Lower lobe of right lung (tissue), 2 donors: ENCODE measurements at regions of chr16 and their contacts with region 1.

Region 1: DNA sequence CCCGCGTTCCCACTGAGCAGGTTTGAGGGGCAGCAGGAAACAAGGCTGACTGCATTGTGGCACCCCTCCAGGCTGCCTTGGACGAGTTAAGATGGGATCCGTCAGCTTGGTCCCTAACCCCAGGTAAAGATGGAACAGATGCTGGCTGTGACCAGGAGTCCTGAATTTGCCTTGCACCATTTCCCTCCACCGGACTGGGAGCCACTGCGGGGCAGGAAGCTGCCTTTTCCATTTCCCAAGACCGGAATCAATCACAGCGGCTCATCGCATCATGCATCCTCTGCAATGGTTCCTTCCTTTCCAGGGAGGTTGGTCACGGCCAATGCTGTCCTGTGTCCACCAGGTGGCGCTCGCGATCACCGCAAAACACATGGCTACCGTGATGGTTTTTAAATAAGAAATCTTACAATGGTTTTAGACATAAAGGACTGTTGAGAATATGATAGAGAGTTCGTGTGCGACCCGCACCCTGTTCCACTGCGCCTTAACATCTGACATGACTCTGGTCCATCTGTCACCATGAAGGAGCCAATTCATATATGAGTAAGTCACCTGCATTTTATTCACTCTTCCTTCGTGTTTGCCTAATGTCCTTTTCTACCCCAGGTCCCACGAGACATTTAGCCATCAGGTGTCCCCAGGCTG is 6.8 kb upstream of the MEAK7 start:
- DNase-seq: peak; percentile 87
- ATAC-seq: peak; percentile 80 to 81
- H3K4me3 ChIP-seq: no peak overlapping the region
- H3K27ac ChIP-seq: no peak overlapping the region
- H3K4me1 ChIP-seq: peaks cover 8% of the 10 kb centered on the region
- H3K27me3 ChIP-seq: no peaks in the 10 kb centered on the region
- CTCF ChIP-seq: peak; percentile 96

Region 2: DNA sequence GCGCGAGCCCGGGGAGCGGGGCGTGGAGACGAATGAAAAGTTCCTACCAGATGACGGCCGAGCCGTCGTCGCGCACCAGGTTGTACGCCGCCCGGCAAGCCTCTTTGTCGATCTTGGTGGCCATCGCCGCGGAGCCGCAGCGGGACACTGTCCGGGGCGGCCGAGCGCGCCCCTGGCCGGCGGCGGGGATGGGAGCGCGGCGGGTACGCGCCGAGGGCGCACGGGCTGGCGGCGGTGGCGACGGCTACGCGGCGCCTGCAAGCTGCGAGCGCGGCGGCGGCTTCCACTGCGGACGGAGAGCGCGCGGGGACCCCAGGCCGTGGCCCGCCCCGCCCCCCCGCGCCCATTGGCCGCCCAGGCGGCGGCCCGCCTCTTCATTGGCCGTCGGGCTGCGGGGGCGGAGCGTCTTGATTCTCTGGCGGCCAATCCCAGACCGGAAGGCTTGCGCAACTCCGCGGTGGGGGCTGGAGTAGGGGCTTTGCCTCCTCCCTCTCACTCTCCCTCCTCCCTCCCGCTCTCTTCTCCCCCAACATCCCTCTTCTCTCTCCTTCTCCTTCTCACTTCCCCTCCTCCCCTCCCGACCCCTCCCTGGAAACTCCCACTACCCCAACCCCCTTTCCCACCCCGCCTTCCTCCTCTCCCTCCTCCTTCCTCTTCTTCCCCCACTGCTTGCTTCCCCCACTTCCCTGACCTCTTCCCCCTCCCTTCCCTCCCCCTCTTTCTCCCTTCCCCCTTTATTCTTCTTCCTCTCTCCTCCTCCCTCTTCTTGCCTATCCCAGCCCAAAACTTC is 106.7 kb after region 1 on chr16 and contains the start of gene COTL1:
- intact Hi-C with region 1: loop called (anchors 5 kb)
- DNase-seq: peak; percentile 98
- ATAC-seq: peak; percentile 90 to 94
- H3K4me3 ChIP-seq: peak within 1 kb of the TSS; percentile 92
- H3K27ac ChIP-seq: peak within 1 kb of the TSS; percentile 81
- H3K4me1 ChIP-seq: peaks cover 42% of the 10 kb centered on the region
- H3K27me3 ChIP-seq: no peaks in the 10 kb centered on the region
- CTCF ChIP-seq: no peak
- total RNA-seq, gene COTL1: 221 TPM

Region 3: GRCh38 chr16:84726079-84726668 is 214.9 kb after region 1 on chr16:
- intact Hi-C with region 1: loop called (anchors 5 kb)
- DNase-seq: peak; percentile 93
- ATAC-seq: peak; percentile 86 to 94
- H3K4me3 ChIP-seq: peak overlapping the region; percentile 21
- H3K27ac ChIP-seq: no peak overlapping the region
- H3K4me1 ChIP-seq: peaks cover 65% of the 10 kb centered on the region
- H3K27me3 ChIP-seq: no peaks in the 10 kb centered on the region
- CTCF ChIP-seq: peak; percentile 96